Activated T-helper 2 cell treated with anti-CD3 and anti-CD28 coated beads, Interferon-gamma antibody, Interleukin-2, Interleukin-4, amounts not matched to agents 10 μg/mL and 5 μg/mL and 100 μg/mL, durations not matched to agents 14 hours and 24 hours and 36 hours (primary cell): ENCODE measurements at regions of chr1 and their contacts with region 1.

Region 1: GRCh38 chr1:150567717-150568593 is 11.5 kb downstream of the MCL1 start:
- DNase-seq: no peak
- H3K4me3 Mint-ChIP-seq: peak overlapping the region; percentile 74
- H3K27ac Mint-ChIP-seq: peak overlapping the region; percentile 95
- H3K4me1 Mint-ChIP-seq: peaks cover 75% of the 10 kb centered on the region
- H3K27me3 Mint-ChIP-seq: no peaks in the 10 kb centered on the region

Region 2: DNA sequence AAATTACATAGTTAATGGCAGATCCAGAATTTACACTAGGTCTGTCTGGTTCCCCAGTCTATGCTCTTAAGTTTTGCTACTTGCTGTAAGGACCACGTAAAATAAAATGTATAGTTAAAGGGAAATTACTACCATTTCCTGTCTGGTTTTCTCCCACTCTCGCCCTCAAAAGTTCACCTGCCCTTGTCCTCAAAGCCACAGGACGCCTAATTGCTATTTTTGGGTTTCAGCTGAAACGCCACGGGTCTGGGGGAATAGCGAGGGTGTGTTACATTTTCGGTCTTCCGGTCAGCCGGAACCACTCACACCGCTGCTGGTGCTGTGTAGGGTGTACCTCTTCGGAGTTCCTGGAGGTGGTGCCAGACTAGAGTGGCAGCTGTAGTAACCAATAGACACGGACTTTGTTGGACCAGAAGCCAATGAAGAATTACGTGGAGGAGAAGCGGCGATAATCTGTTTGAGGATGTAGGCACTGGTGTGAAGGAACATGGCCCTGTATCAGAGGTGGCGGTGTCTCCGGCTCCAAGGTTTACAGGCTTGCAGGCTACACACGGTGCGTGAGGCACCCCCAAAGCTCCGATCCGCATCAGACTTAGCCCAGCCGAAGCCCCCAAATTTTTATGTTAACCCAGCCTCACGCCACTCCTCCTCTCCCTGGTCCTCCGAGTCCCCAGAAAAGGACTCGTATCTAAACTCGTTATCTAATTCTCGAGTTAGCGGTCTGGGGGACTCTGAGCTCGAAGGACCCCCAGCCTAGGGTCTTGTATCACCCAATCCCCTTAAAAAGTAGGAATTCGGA is 80.8 kb before region 1 on chr1 and contains the start of gene TARS2:
- intact Hi-C with region 1: loop called (anchors 2 kb)
- DNase-seq: peak; percentile 95
- H3K4me3 Mint-ChIP-seq: peak within 1 kb of the TSS; percentile 98
- H3K27ac Mint-ChIP-seq: peak within 1 kb of the TSS; percentile 98
- H3K4me1 Mint-ChIP-seq: peaks cover 18% of the 10 kb centered on the region
- H3K27me3 Mint-ChIP-seq: no peaks in the 10 kb centered on the region
- total RNA-seq, gene TARS2: 66.2 and 69.8 TPM in 2 replicates

Region 3: GRCh38 chr1:150578965-150579798 is 11.2 kb after region 1 on chr1 and contains the start of gene MCL1:
- intact Hi-C with region 1: loop called (anchors 1 kb)
- DNase-seq: peak; percentile 89
- H3K4me3 Mint-ChIP-seq: peak within 1 kb of the TSS; percentile 98
- H3K27ac Mint-ChIP-seq: peak within 1 kb of the TSS; percentile 98
- H3K4me1 Mint-ChIP-seq: peaks cover 30% of the 10 kb centered on the region
- H3K27me3 Mint-ChIP-seq: no peaks in the 10 kb centered on the region
- total RNA-seq, gene MCL1: 217 and 221 TPM in 2 replicates

Region 4: GRCh38 chr1:150613061-150613920 is 45.3 kb after region 1 on chr1:
- intact Hi-C with region 1: loop called (anchors 1 kb)
- DNase-seq: peak; percentile 32
- H3K4me3 Mint-ChIP-seq: peak overlapping the region; percentile 23
- H3K27ac Mint-ChIP-seq: peak overlapping the region; percentile 90
- H3K4me1 Mint-ChIP-seq: peaks cover 56% of the 10 kb centered on the region
- H3K27me3 Mint-ChIP-seq: no peaks in the 10 kb centered on the region

Region 5: GRCh38 chr1:150629115-150629928 is 61.4 kb after region 1 on chr1 and contains the start of gene ENSA:
- intact Hi-C with region 1: loop called (anchors 1 kb)
- DNase-seq: peak; percentile 96
- H3K4me3 Mint-ChIP-seq: no peak within 1 kb of the TSS
- H3K27ac Mint-ChIP-seq: no peak within 1 kb of the TSS
- H3K4me1 Mint-ChIP-seq: peaks cover 41% of the 10 kb centered on the region
- H3K27me3 Mint-ChIP-seq: no peaks in the 10 kb centered on the region
- total RNA-seq, gene ENSA: 252 and 253 TPM in 2 replicates

Region 6: DNA sequence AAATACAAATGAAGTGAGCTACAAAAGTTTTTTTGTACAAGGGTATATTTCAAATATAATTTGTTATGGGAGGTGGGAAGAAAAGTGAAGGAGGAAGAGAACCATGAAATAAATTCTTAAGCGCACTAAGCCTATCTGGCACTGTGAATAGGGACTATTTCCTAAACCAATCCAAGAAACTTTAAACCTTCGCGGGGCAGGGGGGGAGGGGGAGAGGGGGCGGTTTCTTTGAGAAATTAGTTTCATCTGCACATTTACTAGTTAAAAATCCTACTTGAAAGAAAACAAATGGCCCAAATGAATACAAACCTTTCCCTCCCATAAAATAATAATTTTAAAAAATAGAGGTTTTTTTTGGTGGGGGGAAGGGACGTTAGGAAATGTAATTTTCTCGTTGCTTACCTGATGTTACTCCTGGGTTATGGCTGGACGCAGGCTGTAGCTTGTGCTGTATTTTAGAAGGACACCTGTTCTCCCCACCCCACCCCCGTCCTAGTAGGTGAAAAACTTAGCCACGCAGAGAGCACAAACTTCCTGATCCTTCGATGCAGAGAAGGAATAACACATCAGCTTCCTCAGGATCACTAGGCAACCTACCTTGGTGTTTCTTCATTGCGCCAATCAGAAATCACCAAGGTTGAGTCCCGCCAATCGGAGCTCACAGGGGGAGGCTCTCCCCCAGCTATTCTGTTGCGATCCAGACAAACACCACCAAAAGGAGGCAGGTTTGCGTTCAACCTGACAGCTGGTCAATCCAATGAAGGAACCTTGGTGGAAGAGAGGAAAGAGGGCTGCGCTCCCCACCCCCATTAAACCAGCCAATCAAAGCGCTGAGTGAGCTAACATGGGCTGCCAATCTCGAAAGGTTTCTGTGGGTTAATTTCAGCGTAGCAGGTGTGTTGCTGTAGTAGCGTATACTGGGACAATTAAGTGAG is 128.9 kb after region 1 on chr1 and contains the start of gene GOLPH3L:
- intact Hi-C with region 1: no loop called
- DNase-seq: peak; percentile 91
- H3K4me3 Mint-ChIP-seq: peak within 1 kb of the TSS; percentile 96
- H3K27ac Mint-ChIP-seq: peak within 1 kb of the TSS; percentile 88
- H3K4me1 Mint-ChIP-seq: peaks cover 17% of the 10 kb centered on the region
- H3K27me3 Mint-ChIP-seq: peaks cover 9% of the 10 kb centered on the region
- total RNA-seq, gene GOLPH3L: 21.3 and 22.4 TPM in 2 replicates

Region 7: DNA sequence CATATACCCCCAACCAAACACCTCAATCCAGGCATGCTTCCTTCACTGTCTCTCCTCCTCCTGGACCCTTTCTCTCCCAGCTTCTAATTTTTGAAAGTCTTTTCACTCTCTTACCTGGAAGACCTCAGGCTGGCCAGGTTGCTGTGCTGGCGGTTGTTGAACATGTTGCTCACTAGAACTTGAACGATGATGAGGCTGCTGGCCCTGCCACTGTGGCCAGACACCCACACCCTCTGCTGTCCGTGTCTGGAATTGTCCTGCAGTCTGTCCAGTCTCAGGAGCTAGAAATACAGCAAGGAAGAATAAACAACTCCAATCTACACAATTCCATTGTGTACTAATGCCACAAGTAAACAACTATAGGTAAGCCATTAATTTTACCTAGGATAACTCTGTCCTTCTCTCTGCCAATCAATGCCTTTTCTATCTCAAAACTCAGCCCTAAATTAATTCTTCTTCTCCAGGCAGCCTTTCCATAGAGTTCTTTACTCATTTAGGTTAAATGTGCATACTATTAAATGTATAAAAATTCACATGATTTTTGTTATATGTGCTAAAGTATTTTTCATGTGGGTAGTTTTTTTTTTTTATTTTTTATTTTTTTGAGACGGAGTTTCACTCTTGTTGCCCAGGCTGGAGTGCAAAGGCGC is 245.2 kb after region 1 on chr1:
- intact Hi-C with region 1: no loop called
- DNase-seq: no peak
- H3K4me3 Mint-ChIP-seq: no peak overlapping the region
- H3K27ac Mint-ChIP-seq: no peak overlapping the region
- H3K4me1 Mint-ChIP-seq: peaks cover under 1% of the 10 kb centered on the region
- H3K27me3 Mint-ChIP-seq: no peaks in the 10 kb centered on the region

Region 8: DNA sequence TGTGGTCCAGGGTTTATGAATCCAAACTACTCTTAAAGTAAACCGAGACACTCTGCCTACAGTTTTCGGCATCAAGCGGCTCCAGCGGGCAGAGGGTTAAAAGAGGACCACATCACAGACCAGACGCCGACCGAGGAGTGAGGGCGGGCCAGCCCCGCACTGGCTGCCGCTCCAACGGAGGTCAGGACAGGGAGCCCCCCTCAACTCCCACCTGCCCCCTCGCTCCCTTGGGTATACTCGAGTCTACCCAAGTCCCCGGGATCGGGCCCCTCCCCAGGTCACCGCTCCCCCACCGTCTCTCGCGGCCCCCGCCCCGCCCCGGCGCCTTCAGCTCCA is 308.1 kb after region 1 on chr1:
- intact Hi-C with region 1: loop called (anchors 1 kb)
- DNase-seq: no peak
- H3K4me3 Mint-ChIP-seq: peak overlapping the region; percentile 95
- H3K27ac Mint-ChIP-seq: peak overlapping the region; percentile 92
- H3K4me1 Mint-ChIP-seq: peaks cover 33% of the 10 kb centered on the region
- H3K27me3 Mint-ChIP-seq: no peaks in the 10 kb centered on the region